MCF 10A (cell line): ENCODE measurements at regions of chr20 and their contacts with region 1.

Region 1: DNA sequence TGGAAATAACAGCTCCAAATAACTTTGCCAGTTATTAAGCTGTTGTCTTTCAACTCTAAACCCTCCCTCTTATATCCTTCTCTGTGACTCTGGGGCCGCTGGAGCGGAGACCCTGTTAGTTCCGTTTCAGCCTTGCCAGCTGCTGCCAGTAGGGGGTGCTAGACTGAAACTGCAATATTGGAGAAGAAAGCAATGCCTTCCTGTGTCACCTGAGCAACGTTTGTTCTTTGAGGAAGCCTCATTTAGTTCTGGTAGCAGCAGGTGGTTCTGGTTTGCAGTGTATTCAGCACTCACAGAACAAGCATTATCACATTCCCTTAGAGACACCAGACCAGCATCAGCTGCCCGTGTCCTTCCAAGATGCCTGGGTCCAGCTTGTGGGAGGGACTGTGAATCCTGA is 22.9 kb upstream of the JAG1 start:
- DNase-seq: no peak
- H3K4me3 Mint-ChIP-seq: no peak overlapping the region
- H3K27ac Mint-ChIP-seq: no peak overlapping the region
- H3K4me1 Mint-ChIP-seq: no peaks in the 10 kb centered on the region
- H3K27me3 Mint-ChIP-seq: no peaks in the 10 kb centered on the region
- CTCF ChIP-seq: peak; percentile 54

Region 2: GRCh38 chr20:10686356-10687133 is 10.1 kb before region 1 on chr20:
- CTCF ChIA-PET with region 1: interaction called, 28 read pairs
- POLR2A ChIA-PET with region 1: interaction called, 7 read pairs
- intact Hi-C with region 1: no loop called
- DNase-seq: no peak
- H3K4me3 Mint-ChIP-seq: no peak overlapping the region
- H3K27ac Mint-ChIP-seq: no peak overlapping the region
- H3K4me1 Mint-ChIP-seq: no peaks in the 10 kb centered on the region
- H3K27me3 Mint-ChIP-seq: no peaks in the 10 kb centered on the region
- CTCF ChIP-seq: no peak

Region 3: GRCh38 chr20:10708351-10709185 is 11.9 kb after region 1 on chr20:
- CTCF ChIA-PET with region 1: interaction called, 22 read pairs
- POLR2A ChIA-PET with region 1: interaction called, 10 read pairs
- intact Hi-C with region 1: no loop called
- DNase-seq: peak; percentile 38
- H3K4me3 Mint-ChIP-seq: no peak overlapping the region
- H3K27ac Mint-ChIP-seq: no peak overlapping the region
- H3K4me1 Mint-ChIP-seq: peaks cover 20% of the 10 kb centered on the region
- H3K27me3 Mint-ChIP-seq: no peaks in the 10 kb centered on the region
- CTCF ChIP-seq: no peak

Region 4: DNA sequence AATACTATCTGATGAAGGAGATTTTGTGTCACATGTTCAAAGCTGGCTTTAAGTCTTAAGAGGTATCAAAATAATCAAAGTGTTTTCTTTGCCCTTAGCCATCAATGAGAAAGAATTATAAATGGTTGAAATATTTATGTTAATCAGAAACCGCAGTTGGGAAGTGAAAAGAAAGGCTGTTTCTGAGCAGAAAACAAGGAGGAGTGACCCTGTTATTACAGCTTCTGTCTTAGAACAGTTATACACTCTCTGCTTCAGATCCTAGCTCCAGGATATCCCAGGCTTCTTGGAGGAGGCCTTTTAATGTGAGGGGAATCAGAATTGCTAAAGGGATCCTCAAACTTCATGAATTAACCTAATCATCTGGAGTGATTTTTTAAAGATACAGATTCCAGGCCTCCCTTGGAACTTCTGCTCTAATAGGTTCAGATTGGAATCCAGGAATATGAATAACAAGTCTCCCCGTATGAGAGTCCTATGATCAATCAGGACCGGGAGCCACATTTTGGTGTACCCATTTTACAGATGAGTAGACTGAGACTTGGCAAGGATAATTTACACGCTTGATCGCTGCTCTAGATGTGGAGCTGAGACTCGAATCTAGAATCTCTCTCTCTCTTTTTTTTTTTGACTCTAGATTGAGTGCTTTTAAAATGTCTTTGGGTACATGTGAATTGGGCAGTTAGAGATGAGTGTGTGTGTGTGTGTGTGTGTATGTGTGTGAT is 28.0 kb after region 1 on chr20:
- CTCF ChIA-PET with region 1: no interaction called
- POLR2A ChIA-PET with region 1: no interaction called
- intact Hi-C with region 1: no loop called
- DNase-seq: no peak
- H3K4me3 Mint-ChIP-seq: no peak overlapping the region
- H3K27ac Mint-ChIP-seq: no peak overlapping the region
- H3K4me1 Mint-ChIP-seq: no peaks in the 10 kb centered on the region
- H3K27me3 Mint-ChIP-seq: no peaks in the 10 kb centered on the region
- CTCF ChIP-seq: no peak